PC-3 (cell line): ENCODE measurements at regions of chr3 and their contacts with region 1.

Region 1: DNA sequence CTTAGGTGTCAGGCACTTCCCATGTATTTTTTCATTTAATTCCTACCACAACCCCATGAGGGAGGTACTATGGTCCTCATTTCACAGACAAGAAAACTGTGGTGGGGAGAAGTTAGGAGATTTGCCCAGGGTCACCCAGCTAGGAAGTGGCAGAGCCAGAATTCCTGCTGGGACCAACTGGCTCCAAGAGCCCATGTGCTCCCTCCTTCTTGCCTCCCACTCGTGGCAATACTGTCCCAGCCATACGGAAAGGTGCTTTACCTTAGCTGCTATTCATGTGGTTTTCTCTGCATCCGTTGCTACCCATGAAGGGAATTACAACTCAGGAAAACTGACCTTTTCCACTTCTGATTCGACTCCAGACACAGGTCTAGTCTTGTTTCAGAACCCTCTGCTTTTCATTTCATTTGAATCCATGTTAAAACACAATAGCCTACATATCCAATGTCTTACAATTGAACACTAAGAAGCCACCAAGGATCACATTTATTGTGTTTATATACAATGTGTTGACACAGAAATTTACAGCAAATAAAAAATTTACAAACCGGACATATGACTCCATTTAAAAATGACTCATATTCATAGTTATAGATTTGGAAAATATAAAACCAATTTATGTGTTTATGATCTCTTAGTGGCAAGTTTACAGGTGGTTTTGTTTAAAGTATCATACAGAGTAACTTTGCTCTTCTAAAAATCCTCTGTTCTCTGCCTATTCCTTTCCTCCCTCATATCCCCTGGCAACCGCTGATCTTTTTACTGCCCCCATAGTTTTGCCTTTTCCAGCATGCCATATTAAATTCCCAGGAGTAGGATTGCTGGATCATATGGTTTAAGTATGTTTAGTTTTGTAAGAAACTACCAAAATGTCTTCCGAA is 58.8 kb downstream of the BTD start:
- DNase-seq: peak; percentile 75
- ATAC-seq: peak; percentile 85
- H3K4me3 ChIP-seq: no peak overlapping the region
- H3K27ac ChIP-seq: peak overlapping the region; percentile 80
- H3K4me1 ChIP-seq: peaks cover 18% of the 10 kb centered on the region
- H3K27me3 ChIP-seq: no peaks in the 10 kb centered on the region
- CTCF ChIP-seq: no peak

Region 2: DNA sequence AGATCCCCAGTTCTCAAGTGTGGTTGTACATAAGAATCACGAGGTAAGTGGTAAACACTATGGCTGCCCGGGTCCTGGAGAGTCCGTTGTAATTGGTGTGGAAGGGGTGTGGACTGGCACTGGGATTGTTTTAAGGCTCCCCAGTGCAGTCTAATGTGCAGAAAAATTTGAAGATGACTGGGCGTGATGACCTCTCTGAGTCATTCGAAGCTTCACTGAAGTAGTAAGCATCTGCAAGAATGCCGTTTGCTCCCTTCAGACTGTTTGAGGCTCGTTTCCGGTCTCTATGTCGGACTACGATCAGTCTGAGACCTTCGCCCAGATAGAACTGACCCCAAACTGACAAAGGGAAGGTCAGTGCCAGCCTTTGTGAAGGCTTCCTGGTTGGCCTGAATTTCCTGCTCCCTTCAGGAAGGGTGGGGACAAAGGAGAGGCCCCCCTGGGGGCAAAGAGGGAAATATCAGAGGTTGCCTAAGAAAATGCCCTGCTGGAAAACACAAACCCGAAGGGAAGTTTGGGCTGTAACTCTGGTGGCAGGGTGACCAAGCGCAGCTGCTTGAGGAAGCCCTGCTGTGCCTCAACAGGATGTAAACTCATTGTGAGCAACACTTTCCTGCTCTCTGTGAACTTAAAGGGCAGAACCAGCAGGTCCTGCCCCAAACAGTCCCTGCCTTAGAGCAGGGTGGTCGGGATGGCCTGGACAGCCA is 24.1 kb before region 1 on chr3:
- CTCF ChIA-PET with region 1: no interaction called
- POLR2A ChIA-PET with region 1: interaction called, 3 read pairs
- intact Hi-C with region 1: loop called (anchors 1 kb)
- DNase-seq: peak; percentile 93
- ATAC-seq: peak; percentile 67
- H3K4me3 ChIP-seq: peak overlapping the region; percentile 53
- H3K27ac ChIP-seq: peak overlapping the region; percentile 97
- H3K4me1 ChIP-seq: peaks cover 72% of the 10 kb centered on the region
- H3K27me3 ChIP-seq: no peaks in the 10 kb centered on the region
- CTCF ChIP-seq: no peak